Activated CD8-positive, alpha-beta T cell treated with anti-CD3 and anti-CD28 coated beads, Interleukin-2, amount 10 ng/mL, durations not matched to agents 7 days and 5 days (primary cell): ENCODE measurements at regions of chr5 and their contacts with region 1.

Region 1: GRCh38 chr5:67156976-67157583 is 39.5 kb downstream of the CD180 start:
- DNase-seq: peak; percentile 63
- ATAC-seq: peak; percentile 70
- H3K4me3 Mint-ChIP-seq: no peak overlapping the region
- H3K27ac Mint-ChIP-seq: peak overlapping the region; percentile 48
- H3K4me1 Mint-ChIP-seq: peaks cover 52% of the 10 kb centered on the region
- H3K27me3 Mint-ChIP-seq: no peaks in the 10 kb centered on the region

Region 2: DNA sequence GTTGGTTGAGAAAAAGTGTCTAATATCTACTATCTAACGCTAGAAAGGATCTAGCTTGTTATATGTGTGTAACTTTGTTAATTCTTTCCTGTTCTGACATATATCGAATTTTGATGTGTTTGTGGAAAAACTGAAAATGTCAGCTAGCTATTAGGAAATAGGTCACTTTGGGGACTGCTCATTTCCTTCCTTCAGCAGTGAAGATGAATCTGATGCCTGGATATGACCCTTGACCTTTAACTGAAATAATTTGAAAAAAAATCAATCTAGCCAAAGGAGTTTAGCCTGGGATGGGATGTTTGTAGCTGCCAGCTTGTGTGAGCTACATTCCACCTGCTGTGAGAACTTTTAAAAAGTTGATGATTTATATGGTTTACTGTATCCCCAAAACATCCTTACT is 27.3 kb before region 1 on chr5:
- CTCF ChIA-PET with region 1: interaction called, 11 read pairs
- POLR2A ChIA-PET with region 1: no interaction called
- DNase-seq: no peak
- ATAC-seq: no peak
- H3K4me3 Mint-ChIP-seq: no peak overlapping the region
- H3K27ac Mint-ChIP-seq: no peak overlapping the region
- H3K4me1 Mint-ChIP-seq: no peaks in the 10 kb centered on the region
- H3K27me3 Mint-ChIP-seq: no peaks in the 10 kb centered on the region

Region 3: GRCh38 chr5:67215583-67216471 is 58.7 kb after region 1 on chr5:
- CTCF ChIA-PET with region 1: interaction called, 441 read pairs
- POLR2A ChIA-PET with region 1: no interaction called
- DNase-seq: peak; percentile 85
- ATAC-seq: peak; percentile 99
- H3K4me3 Mint-ChIP-seq: peak overlapping the region; percentile 67
- H3K27ac Mint-ChIP-seq: peak overlapping the region; percentile 99
- H3K4me1 Mint-ChIP-seq: peaks cover 68% of the 10 kb centered on the region
- H3K27me3 Mint-ChIP-seq: no peaks in the 10 kb centered on the region